OCI-LY7 (cell line): ENCODE measurements at regions of chr2 and their contacts with region 1.

Region 1: DNA sequence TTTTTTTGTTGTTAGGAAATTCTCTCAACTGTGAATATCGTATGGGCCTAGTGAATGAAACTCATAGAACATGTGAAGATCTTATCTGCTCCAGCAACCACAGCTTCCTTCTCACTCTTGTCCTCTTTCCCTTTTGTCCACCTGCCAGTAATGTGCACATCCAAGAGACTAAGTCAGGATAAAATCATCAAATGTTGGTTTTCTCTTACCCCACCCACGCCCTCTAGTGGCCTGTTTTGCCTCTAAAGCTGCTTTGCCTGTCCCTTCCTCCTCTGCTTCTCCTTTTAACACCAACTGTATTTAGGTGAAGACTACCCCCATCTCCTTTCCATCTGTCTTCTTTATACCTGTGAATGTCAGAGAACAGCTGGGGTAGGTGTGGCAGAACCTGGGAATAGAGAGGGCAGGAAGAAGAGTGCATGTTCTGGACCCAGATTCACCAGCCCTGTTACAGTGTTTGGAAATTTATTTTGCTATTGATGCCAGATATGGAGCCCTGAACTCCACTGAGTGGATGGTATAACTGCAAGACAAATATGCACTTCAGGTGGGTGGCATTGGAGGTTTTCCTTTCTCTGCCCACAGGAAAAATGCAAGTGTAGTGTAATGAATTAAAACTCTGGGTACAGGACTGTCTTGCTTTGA is 8.4 kb upstream of the MGAT5 start:
- DNase-seq: peak; percentile 88
- H3K4me3 ChIP-seq: peak overlapping the region; percentile 24
- H3K27ac ChIP-seq: peak overlapping the region; percentile 63
- H3K4me1 ChIP-seq: peaks cover 78% of the 10 kb centered on the region
- CTCF ChIP-seq: peak; percentile 92

Region 2: DNA sequence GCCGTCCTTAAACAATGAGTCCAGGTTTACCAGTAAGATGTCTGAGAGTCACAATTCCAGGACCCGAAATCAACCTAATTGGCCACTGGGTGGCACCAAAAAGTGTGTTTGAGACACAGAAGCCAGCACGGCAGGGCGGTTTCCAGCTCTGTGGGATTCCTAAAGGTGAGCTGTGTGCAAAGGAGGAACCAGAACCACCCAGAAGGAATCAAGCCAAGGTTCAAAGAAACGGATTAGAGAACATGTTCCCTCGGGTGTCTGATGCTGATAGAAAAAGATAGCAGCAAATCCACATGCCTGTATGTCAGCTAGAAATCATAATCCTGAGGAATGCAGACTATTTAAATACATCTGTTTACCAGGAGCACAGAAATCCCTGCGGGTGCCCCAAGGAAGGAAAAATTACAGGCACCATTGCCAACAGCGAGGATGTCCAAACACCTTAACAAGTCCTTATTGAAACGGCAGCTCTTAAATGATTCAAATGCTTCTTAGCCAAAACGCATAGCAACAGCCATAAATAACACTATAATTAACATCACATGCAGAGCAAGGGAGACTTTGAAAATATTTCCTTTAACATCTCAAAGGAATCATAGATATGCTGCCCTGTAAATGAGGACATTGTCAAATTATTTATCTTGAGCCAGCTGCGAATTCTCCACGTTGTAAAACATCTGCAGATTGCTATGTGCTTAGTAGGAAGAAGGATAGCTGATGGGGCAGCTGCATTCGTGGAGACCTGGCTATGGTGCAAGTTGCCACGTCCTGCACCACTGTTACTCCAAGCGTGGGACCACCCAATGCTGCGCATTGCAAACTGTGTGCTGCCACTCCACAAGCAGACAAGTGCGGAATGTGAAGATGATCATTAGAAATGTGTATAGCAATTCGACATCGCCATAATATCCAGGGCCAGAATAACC is 358.5 kb before region 1 on chr2:
- CTCF ChIA-PET with region 1: no interaction called
- POLR2A ChIA-PET with region 1: interaction called, 6 read pairs
- intact Hi-C with region 1: loop called (anchors 1 kb)
- DNase-seq: peak; percentile 76
- H3K4me3 ChIP-seq: no peak overlapping the region
- H3K27ac ChIP-seq: no peak overlapping the region
- H3K4me1 ChIP-seq: no peaks in the 10 kb centered on the region
- CTCF ChIP-seq: peak; percentile 86

Region 3: DNA sequence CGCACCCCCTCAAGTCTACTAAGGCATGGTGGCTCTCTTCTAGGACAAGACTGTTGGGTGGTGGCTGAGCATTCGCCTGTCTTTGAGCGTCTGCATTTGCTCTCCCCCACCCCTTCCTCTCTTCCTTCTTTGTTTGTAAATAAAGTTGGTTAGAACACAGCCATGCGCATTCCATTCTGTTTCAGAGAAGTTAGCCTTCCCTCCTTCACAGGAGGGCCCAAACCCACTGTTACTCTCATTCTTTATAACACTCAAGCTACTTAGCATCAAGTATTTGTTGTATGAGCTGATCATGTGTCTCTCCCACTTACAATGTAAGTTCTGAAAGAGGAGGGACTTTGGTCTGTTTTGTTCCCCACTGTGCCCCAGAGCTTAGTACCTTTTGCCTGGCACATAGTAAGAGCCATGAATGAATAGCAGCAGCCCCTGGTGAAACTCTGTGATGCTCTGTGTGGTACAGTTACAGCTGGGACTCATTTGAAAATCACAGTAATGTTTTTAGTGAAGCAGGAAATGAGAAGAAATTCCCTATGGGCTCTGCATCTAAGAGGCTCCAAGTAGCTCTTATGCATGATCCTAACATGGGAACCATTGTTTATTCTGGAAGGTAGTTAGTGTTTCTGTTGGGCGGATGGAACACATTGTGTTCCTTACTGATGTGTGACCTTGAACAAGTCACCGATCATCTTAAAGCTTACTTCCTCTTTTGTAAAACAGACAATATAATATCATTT is 16.1 kb after region 1 on chr2:
- CTCF ChIA-PET with region 1: interaction called, 5 read pairs
- POLR2A ChIA-PET with region 1: interaction called, 23 read pairs
- intact Hi-C with region 1: no loop called
- DNase-seq: peak; percentile 75
- H3K4me3 ChIP-seq: peak overlapping the region; percentile 40
- H3K27ac ChIP-seq: peak overlapping the region; percentile 91
- H3K4me1 ChIP-seq: peaks cover 86% of the 10 kb centered on the region
- CTCF ChIP-seq: no peak

Region 4: DNA sequence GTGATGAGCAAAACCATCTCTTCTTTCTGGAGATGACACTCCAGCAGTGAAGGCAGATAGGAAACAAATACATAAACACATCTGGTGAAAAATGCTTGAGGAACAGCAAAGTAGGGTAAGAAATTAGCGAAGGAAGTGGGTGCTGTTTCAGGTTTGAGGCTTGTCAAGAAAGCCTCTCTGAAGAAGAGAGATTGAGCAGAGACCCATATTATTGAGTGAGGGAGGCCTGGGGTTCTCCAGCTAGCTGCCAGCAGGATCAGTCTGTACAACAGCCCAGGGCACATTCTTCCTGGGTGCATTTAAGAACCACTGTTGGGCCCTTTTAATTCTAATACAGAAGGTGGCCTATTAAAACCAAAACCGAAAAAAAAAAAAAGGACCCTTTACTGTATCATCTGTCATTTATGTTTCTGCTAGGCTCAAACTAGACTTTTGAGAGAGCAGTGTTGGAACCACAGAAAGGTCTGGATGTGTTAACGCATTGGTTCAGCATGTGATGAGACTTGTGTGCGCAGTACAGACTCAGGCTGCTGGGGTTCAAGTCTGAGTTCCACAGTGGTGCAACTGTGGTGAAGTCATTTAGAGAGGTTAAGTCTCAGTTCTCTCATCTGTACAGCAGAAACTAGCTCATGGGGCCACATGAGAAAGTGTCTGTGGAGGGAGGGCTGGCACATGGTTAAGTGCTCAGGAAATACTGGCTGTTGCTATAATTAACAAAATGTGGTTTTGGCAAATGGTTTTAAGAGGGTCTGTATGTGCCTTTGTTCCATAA is 37.4 kb after region 1 on chr2:
- CTCF ChIA-PET with region 1: no interaction called
- POLR2A ChIA-PET with region 1: interaction called, 7 read pairs
- intact Hi-C with region 1: loop called (anchors 5 kb)
- DNase-seq: peak; percentile 70
- H3K4me3 ChIP-seq: peak overlapping the region; percentile 27
- H3K27ac ChIP-seq: peak overlapping the region; percentile 76
- H3K4me1 ChIP-seq: peaks cover 87% of the 10 kb centered on the region
- CTCF ChIP-seq: no peak

Region 5: GRCh38 chr2:134295441-134295840 is 50.0 kb after region 1 on chr2:
- CTCF ChIA-PET with region 1: no interaction called
- POLR2A ChIA-PET with region 1: interaction called, 3 read pairs
- intact Hi-C with region 1: loop called (anchors 2 kb)
- DNase-seq: no peak
- H3K4me3 ChIP-seq: no peak overlapping the region
- H3K27ac ChIP-seq: peak overlapping the region; percentile 65
- H3K4me1 ChIP-seq: peaks cover 63% of the 10 kb centered on the region
- CTCF ChIP-seq: no peak